Activated T-helper 2 cell treated with anti-CD3 and anti-CD28 coated beads, Interferon-gamma antibody, Interleukin-2, Interleukin-4, amounts not matched to agents 10 μg/mL and 5 μg/mL and 100 μg/mL, durations not matched to agents 14 hours and 24 hours and 36 hours (primary cell): ENCODE measurements at regions of chr1 and their contacts with region 1.

Region 1: GRCh38 chr1:180631766-180632325 is at the start of gene XPR1:
- DNase-seq: peak; percentile 92
- H3K4me3 Mint-ChIP-seq: no peak within 1 kb of the TSS
- H3K27ac Mint-ChIP-seq: peak within 1 kb of the TSS; percentile 81
- H3K4me1 Mint-ChIP-seq: peaks cover 11% of the 10 kb centered on the region
- H3K27me3 Mint-ChIP-seq: peaks cover 5% of the 10 kb centered on the region
- total RNA-seq, gene XPR1: 20.8 and 23.6 TPM in 2 replicates

Region 2: DNA sequence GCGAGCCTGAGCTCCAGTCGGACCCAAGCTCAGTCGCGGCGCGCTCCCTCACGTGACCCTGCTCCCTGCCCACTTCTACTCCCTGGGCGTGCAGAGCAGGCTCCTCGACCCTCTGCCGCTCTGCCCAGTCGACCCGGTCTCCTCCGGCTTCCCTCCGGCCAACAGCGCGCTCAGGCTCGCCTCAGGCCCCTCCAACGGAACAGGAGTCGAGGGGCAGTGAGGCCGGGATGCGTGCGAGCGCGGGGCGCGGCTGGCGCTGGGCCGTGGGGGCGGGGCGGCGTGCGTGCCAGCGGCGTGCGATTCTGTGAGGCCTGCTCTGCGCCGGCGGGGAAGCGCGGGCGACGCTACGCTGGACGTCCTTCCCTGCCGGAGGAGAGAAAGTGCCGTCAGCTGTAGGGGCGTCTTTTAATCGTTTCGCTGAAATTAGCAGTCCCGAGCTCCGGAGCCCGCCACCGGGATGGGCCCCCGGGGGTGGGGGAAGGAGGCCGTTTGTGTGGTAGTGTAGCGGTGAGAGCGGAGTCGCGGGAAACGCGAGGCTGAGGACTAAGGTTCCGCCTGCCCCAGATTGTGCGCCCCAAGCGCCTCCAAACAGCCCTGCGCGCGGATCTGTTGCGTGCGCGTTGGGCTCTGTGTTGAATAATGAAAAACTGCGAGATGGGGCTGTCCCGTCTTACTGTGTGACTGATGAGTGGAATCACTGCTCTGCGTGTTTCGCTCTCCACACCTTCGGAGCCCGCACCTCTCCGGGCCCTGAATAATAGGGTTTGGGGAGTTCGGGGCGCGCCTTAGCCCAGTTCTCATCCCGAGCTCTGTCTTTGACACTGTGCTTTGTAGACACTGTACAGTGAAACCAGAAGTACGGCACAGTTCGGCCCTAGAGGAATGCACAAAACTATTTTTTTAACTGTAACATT is 129.2 kb before region 1 on chr1 and contains the start of gene ACBD6:
- intact Hi-C with region 1: loop called (anchors 1 kb)
- DNase-seq: peak; percentile 84
- H3K4me3 Mint-ChIP-seq: peak within 1 kb of the TSS; percentile 98
- H3K27ac Mint-ChIP-seq: peak within 1 kb of the TSS; percentile 96
- H3K4me1 Mint-ChIP-seq: peaks cover 22% of the 10 kb centered on the region
- H3K27me3 Mint-ChIP-seq: no peaks in the 10 kb centered on the region
- total RNA-seq, gene ACBD6: 48.9 and 50.1 TPM in 2 replicates

Region 3: DNA sequence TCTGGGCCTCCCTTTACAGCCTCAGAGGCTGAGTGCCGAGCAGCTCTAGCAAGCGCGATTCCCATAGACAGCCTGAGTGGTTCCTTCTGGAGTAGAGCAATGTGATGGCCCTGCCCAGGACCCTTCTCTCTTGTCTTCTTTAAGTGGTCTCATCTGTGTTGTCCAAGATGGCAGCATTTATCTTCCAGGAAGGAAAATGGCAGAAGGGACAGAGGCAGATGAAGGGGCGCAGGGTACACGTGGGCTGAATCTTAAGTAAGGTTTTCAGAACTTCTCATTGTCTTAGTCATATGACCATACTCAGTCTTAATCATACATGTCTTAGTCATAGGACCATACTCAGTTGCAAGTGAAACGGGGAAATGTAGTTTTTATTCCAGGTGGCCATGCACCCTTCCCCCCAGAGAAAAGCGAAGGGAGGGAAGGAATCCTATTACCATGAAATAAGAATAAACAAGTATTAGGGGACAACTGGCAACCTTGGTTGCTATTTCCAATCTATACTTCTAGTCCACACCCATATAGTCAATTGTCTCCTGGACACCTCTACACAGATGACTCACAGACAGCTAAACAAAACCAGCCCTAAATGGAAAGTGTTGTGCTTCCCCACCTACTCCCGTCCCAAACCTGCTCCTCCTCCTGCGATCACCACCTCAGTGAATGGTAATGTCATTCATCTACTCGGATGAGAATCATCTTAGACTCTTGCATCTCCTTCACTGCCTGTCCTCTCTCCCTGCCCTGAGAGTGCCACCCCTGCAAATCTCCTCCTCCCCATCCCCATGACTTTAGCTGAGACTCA is 59.8 kb before region 1 on chr1:
- intact Hi-C with region 1: loop called (anchors 1 kb)
- DNase-seq: no peak
- H3K4me3 Mint-ChIP-seq: peak overlapping the region; percentile 0
- H3K27ac Mint-ChIP-seq: peak overlapping the region; percentile 18
- H3K4me1 Mint-ChIP-seq: peaks cover 24% of the 10 kb centered on the region
- H3K27me3 Mint-ChIP-seq: peaks cover 5% of the 10 kb centered on the region

Region 4: GRCh38 chr1:180765151-180765550 is 133.3 kb after region 1 on chr1:
- intact Hi-C with region 1: no loop called
- DNase-seq: no peak
- H3K4me3 Mint-ChIP-seq: no peak overlapping the region
- H3K27ac Mint-ChIP-seq: no peak overlapping the region
- H3K4me1 Mint-ChIP-seq: no peaks in the 10 kb centered on the region
- H3K27me3 Mint-ChIP-seq: no peaks in the 10 kb centered on the region

Region 5: DNA sequence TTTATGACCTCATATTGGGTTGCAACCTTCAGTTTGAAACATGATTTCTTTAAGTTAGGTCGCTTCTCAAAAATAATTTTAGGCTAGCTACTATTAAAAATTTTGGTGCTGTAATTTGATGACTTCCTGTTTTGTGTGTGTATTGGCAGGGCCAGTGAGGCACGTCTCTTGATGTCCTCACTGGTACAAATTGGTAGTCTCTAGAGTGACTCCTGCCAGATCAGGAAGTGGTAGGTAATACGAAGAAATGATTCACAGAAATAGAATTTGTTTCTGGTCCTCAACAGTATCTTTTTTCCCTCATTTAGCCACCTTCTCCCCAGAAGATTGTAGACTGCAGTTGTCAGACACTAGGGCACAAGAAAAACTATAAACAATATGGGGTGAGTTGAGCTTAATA is 160.0 kb after region 1 on chr1:
- intact Hi-C with region 1: no loop called
- DNase-seq: no peak
- H3K4me3 Mint-ChIP-seq: no peak overlapping the region
- H3K27ac Mint-ChIP-seq: no peak overlapping the region
- H3K4me1 Mint-ChIP-seq: peaks cover 10% of the 10 kb centered on the region
- H3K27me3 Mint-ChIP-seq: no peaks in the 10 kb centered on the region

Region 6: GRCh38 chr1:180863158-180863775 is 231.4 kb after region 1 on chr1:
- intact Hi-C with region 1: loop called (anchors 5 kb)
- DNase-seq: no peak
- H3K4me3 Mint-ChIP-seq: no peak overlapping the region
- H3K27ac Mint-ChIP-seq: no peak overlapping the region
- H3K4me1 Mint-ChIP-seq: peaks cover 1% of the 10 kb centered on the region
- H3K27me3 Mint-ChIP-seq: no peaks in the 10 kb centered on the region

Region 7: DNA sequence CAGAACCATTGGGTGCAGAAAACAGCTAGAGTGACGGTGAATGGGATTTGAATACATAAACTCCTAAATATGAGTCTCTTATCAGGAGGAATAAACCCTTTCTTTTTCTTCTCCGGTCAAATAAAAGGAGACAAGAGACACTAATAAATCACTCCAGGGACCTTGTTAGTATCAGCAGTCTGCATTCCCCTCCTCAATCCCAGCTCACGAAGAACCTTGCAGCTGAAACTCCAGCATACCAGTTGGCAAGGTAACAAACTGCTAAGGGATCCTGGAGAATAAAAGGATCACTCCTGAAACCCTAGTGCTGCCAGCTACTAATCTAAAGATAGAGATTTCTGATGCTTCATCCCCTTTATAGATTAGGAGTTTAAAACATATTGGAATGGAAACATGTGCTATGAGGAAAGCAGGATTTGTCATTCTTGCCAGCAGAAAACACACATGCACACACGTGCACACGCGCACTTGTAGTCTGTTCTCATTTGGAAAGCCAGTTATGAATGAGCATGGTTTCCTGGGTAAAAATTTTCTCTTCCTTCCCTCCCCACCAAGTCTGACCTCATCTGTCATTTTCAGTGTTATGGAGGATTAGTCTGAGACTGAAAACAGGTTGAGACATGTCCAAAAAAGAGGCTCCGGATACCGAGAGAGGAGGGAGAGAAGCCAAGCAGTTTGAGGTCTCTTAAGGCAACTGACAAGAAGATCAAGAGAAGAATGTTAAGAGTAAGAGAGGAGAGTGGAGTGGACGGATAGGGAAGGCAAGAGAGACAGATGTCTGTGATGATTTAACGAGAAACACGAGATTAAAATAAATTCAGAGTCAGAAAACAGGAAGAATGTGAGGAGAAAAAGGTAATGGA is 467.5 kb after region 1 on chr1:
- intact Hi-C with region 1: loop called (anchors 5 kb)
- DNase-seq: peak; percentile 45
- H3K4me3 Mint-ChIP-seq: peak overlapping the region; percentile 74
- H3K27ac Mint-ChIP-seq: peak overlapping the region; percentile 98
- H3K4me1 Mint-ChIP-seq: peaks cover 85% of the 10 kb centered on the region
- H3K27me3 Mint-ChIP-seq: no peaks in the 10 kb centered on the region